Activated CD4-positive, alpha-beta T cell treated with anti-CD3 and anti-CD28 coated beads, Interleukin-2, amount 10 ng/mL, durations not matched to agents 24 days and 14 days (primary cell): ENCODE measurements at regions of chr7 and their contacts with region 1.

Region 1: GRCh38 chr7:13279854-13280435 is 592.5 kb downstream of the ARL4A start:
- DNase-seq: no peak
- H3K4me3 Mint-ChIP-seq: no peak overlapping the region
- H3K27ac Mint-ChIP-seq: no peak overlapping the region
- H3K4me1 Mint-ChIP-seq: no peaks in the 10 kb centered on the region
- H3K27me3 Mint-ChIP-seq: no peaks in the 10 kb centered on the region

Region 2: DNA sequence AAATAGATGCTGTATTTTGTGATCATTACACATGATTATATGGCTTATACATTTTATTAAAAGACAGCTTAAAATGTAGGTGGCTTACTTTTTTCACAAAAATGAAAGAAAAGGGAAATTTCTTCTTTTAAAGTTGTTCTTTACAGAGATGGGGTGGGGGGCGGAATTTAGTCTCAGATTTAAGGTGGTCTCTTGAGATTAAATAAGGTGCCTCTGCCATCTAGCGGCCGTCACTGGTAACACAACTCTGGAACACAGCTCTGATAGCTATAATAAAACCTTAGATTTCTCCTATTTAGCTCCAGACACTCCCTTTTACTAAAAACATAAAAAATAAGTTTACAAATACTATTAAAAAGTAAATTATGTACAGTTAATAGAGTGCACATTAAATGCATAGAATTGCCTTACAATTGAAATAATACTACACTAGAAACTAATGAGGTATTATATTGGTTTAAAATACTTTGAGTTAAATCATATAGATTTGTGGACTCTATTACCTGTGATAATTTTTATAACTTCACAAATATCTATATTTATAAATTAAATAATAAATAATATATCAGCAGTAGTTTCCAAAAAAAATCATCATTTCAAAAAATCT is 1411.8 kb after region 1 on chr7:
- intact Hi-C with region 1: loop called (anchors 2 kb)
- DNase-seq: peak; percentile 72
- H3K4me3 Mint-ChIP-seq: no peak overlapping the region
- H3K27ac Mint-ChIP-seq: no peak overlapping the region
- H3K4me1 Mint-ChIP-seq: no peaks in the 10 kb centered on the region
- H3K27me3 Mint-ChIP-seq: no peaks in the 10 kb centered on the region